Lower leg skin (tissue), 4 donors: ENCODE measurements at regions of chr2 and their contacts with region 1.

Region 1: GRCh38 chr2:196337208-196337953 is 166.0 kb upstream of the STK17B start:
- DNase-seq: no peak
- H3K4me3 ChIP-seq: no peak overlapping the region
- CTCF ChIP-seq: no peak
- POLR2A ChIP-seq: no peak

Region 2: GRCh38 chr2:195683174-195683573 is 654.2 kb before region 1 on chr2:
- intact Hi-C with region 1: no loop called
- DNase-seq: no peak
- H3K4me3 ChIP-seq: no peak overlapping the region
- CTCF ChIP-seq: no peak
- POLR2A ChIP-seq: no peak

Region 3: DNA sequence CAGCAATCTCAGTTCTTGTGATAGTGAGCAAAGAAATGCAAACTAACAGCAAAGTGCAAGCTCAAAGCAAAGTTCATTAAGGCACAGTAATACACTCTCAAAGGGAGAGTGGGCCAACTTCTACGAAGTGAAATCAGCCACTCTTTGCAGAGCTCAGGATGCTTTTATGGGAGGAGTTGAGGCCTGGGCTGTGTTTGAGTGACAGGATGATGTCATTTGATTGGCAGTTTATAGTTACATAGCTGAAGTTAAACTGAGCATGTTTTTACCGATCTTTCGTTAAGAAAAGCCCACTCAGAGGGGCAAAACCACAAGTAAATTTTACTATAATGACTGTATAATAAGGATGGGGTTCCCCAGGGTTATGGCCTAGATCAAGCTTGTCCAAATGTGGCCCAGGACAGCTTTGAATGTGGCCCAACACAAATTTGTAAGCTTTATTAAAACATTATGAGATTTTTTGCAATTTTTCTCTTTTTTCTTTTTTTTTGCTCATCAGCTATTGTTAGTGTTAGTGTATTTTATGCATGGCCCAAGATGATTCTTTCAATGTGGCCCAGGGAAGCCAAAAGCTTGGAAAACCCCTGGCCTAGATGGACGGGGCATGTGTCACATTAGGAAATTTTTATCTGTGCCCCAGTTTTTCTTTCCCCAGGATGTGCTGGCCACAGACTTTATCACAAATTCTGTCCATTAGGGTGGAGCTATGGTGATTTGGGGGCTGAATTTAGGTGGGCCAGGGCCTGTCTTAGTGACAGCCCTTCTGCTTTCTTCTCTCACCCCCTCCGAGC is 260.4 kb before region 1 on chr2:
- intact Hi-C with region 1: loop called (anchors 5 kb)
- DNase-seq: no peak
- H3K4me3 ChIP-seq: no peak overlapping the region
- CTCF ChIP-seq: no peak
- POLR2A ChIP-seq: no peak

Region 4: DNA sequence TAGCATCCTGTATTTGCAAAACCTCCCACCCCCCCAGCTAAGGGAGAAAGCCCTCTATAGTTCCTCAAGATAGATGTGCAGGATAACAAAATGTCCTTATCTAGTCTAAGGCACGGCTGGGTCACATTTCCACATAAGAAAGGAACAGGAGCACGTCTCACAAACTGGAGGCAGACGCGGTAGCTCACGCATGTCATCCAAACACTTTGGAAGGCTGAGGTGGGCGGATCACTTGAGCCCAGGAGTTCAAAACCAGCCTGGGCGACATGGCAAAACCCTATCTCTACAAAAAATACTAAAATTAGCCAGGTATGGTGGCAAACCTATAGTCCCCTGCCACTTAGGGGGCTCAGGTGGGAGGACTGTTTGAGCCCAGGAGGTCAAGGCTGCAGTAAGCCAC is 1088.2 kb after region 1 on chr2:
- intact Hi-C with region 1: no loop called
- DNase-seq: no peak
- H3K4me3 ChIP-seq: no peak overlapping the region
- CTCF ChIP-seq: no peak
- POLR2A ChIP-seq: no peak